ENCODE measurements at regions of chr2 and their contacts with region 1.

Region 1: DNA sequence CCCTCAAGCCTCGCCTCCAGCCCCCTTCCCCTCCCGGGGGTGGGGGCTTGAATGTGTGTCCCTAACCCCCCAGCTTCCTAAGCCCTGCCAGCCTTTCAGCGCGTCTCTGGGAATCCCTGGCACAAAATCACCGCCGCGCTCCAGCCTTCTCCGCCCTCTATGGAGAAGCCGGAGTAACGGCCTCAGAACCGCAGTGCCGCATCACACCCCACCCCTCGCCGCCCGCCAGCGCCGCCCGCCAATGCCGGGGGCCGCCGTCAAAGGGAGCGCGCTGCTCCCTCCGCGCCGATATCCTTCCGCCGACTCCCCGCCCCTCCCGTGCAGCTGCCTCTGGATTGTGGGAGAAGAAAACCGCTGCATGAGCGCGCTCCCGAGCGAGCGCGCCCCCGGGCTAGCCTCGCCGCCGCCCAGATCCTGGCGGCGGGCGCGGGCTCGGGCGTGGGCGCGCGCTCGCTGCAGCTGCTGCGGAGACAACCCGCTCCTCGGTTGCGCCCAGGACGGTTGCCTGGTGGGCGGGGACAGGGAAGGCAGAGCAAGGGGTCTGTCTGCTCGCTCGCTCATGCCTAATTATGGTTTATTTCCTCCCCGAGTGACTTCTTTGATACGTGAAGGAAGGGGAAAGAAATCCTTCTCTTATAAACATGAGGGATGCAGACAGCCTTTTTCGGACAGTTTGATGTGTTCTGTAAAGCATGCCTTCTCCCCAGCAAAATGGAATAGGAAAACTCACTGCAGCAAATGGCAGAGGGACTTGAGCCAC is at the start of gene CCDC88A:
- DNase-seq: peak; percentile 87
- ATAC-seq: peak; percentile 92
- H3K4me3 Mint-ChIP-seq: peak within 1 kb of the TSS; percentile 92
- H3K27ac Mint-ChIP-seq: peak within 1 kb of the TSS; percentile 73
- H3K4me1 Mint-ChIP-seq: peaks cover 28% of the 10 kb centered on the region
- H3K27me3 Mint-ChIP-seq: no peaks in the 10 kb centered on the region
- CTCF ChIP-seq: no peak
- total RNA-seq, gene CCDC88A: 14.8 to 15.8 TPM

Region 2: GRCh38 chr2:55282110-55282917 is 137.5 kb before region 1 on chr2:
- CTCF ChIA-PET with region 1: no interaction called
- POLR2A ChIA-PET with region 1: no interaction called
- intact Hi-C with region 1: loop called (anchors 10 kb)
- DNase-seq: peak; percentile 89
- ATAC-seq: peak; percentile 99
- H3K4me3 Mint-ChIP-seq: peak overlapping the region; percentile 95
- H3K27ac Mint-ChIP-seq: peak overlapping the region; percentile 94
- H3K4me1 Mint-ChIP-seq: peaks cover 20% of the 10 kb centered on the region
- H3K27me3 Mint-ChIP-seq: no peaks in the 10 kb centered on the region
- CTCF ChIP-seq: no peak